ENCODE measurements at regions of chr22 and their contacts with region 1.

Region 1: GRCh38 chr22:22753526-22754267 is 109.3 kb downstream of the GGTLC2 start:
- DNase-seq: peak; percentile 87
- CTCF ChIP-seq: peak; percentile 89

Region 2: GRCh38 chr22:22702237-22703202 is 51.2 kb before region 1 on chr22:
- CTCF ChIA-PET with region 1: interaction called, 30 read pairs
- POLR2A ChIA-PET with region 1: no interaction called
- DNase-seq: no peak
- CTCF ChIP-seq: peak; percentile 72

Region 3: DNA sequence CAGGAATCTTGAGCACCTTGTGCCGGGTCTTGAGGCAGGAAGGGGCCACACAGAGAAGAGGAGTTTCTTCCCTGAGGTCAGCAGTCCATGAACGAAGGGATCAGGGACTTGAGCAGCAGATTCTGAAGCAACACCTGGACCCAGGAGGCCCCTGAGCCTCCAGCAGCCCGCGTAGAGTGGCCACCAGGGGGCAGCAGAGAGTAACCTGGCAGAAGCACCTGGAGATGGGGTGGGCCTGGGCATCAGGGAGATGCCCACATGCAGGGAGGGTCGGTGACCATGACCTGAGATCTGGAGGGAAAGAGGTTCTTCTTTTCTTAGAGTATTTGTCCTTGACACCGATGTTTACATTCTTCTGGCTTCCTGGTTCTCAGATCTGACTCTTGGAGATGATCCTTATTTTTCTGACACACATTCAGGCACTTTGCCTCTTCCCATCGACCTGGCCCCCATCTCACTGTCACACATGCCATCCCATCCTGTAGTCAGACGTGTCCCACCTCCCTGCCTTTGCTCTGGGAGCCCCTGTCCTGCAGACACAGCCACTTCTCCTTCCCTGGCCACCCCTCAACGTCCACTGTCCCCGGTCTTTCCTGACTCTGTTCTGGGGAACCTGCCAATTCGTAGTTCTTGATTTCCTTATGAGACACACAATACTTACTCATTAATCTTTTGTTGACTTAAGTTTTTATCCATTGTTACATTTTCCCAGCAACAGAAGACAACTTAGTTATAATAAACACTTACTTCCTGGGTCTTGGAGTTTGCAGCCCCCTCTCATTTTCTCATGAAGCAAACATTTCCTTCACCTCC is 42.8 kb before region 1 on chr22:
- CTCF ChIA-PET with region 1: interaction called, 14 read pairs
- POLR2A ChIA-PET with region 1: no interaction called
- DNase-seq: peak; percentile 71
- CTCF ChIP-seq: peak; percentile 90

Region 4: DNA sequence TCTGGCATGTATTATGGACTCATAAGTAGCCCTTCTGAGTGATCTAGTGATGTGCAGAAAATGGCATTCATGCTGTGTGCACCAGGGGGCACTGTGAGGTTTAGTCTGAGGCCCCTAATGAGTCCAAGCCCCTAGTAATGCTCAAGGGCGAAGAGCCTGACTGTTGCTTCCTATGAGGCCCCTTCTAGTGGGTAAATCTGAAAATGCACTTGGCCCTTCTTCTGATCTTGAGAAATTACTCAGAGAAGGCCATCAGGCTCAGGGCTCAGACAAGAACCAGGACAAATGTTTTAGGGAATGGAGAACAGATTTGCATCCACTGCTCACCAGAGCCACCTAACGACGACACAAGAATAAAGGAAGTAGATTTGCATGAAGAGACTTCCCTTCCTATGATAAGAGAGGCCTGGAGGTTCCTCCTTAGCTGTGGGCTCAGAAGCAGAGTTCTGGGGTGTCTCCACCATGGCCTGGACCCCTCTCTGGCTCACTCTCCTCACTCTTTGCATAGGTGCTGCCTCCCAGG is 33.4 kb before region 1 on chr22:
- CTCF ChIA-PET with region 1: interaction called, 36 read pairs
- POLR2A ChIA-PET with region 1: no interaction called
- DNase-seq: peak; percentile 72
- CTCF ChIP-seq: peak; percentile 71

Region 5: GRCh38 chr22:22770280-22770871 is 16.7 kb after region 1 on chr22:
- CTCF ChIA-PET with region 1: interaction called, 62 read pairs
- POLR2A ChIA-PET with region 1: no interaction called
- DNase-seq: no peak
- CTCF ChIP-seq: peak; percentile 65

Region 6: GRCh38 chr22:22787786-22788459 is 34.2 kb after region 1 on chr22:
- CTCF ChIA-PET with region 1: interaction called, 14 read pairs
- POLR2A ChIA-PET with region 1: no interaction called
- DNase-seq: peak; percentile 79
- CTCF ChIP-seq: peak; percentile 85